Activated CD8-positive, alpha-beta T cell treated with anti-CD3 and anti-CD28 coated beads, Interleukin-2, amount 10 ng/mL, durations not matched to agents 7 days and 5 days (primary cell): ENCODE measurements at regions of chr19 and their contacts with region 1.

Region 1: DNA sequence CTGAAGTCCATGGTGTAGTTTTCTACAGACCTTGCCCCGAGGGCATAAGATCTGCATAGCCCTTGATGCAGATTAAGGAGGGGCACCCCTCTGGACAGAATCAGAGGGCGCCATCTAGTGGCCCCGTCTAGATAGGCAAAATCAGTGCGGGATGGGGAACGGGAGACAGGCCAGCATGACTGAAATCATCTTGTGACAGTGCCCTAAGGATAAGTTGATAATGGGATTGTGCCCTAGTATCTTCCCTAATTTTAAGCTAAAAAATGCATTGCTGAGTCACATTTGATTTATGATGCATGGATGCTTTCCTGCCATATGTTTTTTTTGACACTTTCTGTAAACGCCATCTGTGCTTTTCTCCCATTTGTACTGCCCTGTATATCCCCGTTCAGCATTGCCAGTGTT is 19.0 kb upstream of the GPI start:
- DNase-seq: peak; percentile 77
- ATAC-seq: peak; percentile 31
- H3K4me3 Mint-ChIP-seq: no peak overlapping the region
- H3K27ac Mint-ChIP-seq: peak overlapping the region; percentile 9
- H3K4me1 Mint-ChIP-seq: peaks cover 27% of the 10 kb centered on the region
- H3K27me3 Mint-ChIP-seq: no peaks in the 10 kb centered on the region

Region 2: DNA sequence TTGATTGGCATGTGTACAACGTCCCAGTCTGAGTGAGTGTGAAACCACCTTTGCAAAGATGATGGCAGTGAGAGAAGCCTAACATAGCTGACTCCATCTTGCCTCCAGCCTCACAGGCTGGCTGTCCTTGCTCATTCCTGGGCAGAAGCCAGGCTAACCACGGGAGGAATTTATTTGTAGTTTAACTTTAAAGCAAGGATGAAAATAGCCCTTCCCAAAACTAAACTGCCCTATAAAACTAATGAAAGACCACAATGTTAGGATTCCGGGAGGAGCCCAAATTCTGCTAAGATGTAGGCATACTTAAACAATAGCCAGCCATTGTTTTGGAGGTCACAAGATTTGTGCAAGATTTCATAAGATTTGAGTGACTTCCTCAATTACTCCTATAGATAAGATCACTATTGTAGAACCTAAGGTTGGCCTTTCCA is 270.3 kb before region 1 on chr19:
- CTCF ChIA-PET with region 1: no interaction called
- POLR2A ChIA-PET with region 1: no interaction called
- DNase-seq: no peak
- ATAC-seq: no peak
- H3K4me3 Mint-ChIP-seq: no peak overlapping the region
- H3K27ac Mint-ChIP-seq: no peak overlapping the region
- H3K4me1 Mint-ChIP-seq: no peaks in the 10 kb centered on the region
- H3K27me3 Mint-ChIP-seq: peaks cover 4% of the 10 kb centered on the region

Region 3: DNA sequence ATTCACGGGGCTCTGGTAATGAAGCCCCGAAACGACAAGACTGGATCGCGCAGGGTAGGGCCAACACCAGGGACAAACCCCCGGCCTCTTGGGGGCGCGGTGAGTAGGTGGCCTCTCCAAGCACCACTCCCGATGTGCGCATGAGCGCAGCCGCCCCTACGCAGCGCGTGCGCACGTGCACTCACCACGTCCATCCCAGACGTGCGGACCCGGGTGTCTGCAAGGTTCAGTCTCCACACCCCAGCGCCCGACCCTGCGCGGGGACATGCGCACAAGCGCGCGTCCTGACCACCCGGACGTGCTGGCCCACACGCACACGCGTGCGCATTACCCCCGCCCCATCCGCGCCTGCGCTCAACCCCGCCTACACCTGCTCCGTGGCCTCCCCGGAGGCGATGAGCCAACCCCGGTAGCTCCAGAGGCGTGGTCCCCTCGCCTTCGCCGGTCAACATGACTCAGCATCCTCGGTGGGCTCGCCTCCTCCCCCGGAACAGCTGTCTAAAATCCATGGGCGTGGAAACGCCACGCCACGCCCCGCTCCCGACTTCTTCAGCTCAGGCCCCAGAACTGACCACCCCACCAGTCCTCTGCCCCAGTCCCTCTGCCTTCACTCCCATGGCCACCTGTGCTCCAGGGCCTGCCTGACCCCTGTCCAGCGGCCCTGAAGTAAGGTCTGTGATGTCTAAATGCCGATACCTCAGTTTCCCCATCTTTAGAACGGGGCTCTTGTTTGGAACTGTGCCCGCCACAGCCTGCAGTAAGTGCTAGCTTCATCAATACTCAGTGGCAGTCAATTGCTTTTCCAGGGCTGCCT is 13.4 kb after region 1 on chr19:
- CTCF ChIA-PET with region 1: interaction called, 20 read pairs
- POLR2A ChIA-PET with region 1: interaction called, 14 read pairs
- DNase-seq: peak; percentile 97
- ATAC-seq: peak; percentile 96
- H3K4me3 Mint-ChIP-seq: peak overlapping the region; percentile 83
- H3K27ac Mint-ChIP-seq: peak overlapping the region; percentile 88
- H3K4me1 Mint-ChIP-seq: peaks cover 49% of the 10 kb centered on the region
- H3K27me3 Mint-ChIP-seq: no peaks in the 10 kb centered on the region

Region 4: GRCh38 chr19:34364830-34365462 is 19.0 kb after region 1 on chr19 and contains the start of gene GPI:
- CTCF ChIA-PET with region 1: interaction called, 20 read pairs
- POLR2A ChIA-PET with region 1: interaction called, 14 read pairs
- DNase-seq: peak; percentile 71
- ATAC-seq: peak; percentile 92
- H3K4me3 Mint-ChIP-seq: peak within 1 kb of the TSS; percentile 91
- H3K27ac Mint-ChIP-seq: peak within 1 kb of the TSS; percentile 91
- H3K4me1 Mint-ChIP-seq: peaks cover 62% of the 10 kb centered on the region
- H3K27me3 Mint-ChIP-seq: no peaks in the 10 kb centered on the region
- total RNA-seq, gene GPI: 661 to 697 TPM

Region 5: GRCh38 chr19:34386645-34387445 is 40.9 kb after region 1 on chr19:
- CTCF ChIA-PET with region 1: no interaction called
- POLR2A ChIA-PET with region 1: no interaction called
- DNase-seq: no peak
- ATAC-seq: no peak
- H3K4me3 Mint-ChIP-seq: no peak overlapping the region
- H3K27ac Mint-ChIP-seq: no peak overlapping the region
- H3K4me1 Mint-ChIP-seq: no peaks in the 10 kb centered on the region
- H3K27me3 Mint-ChIP-seq: no peaks in the 10 kb centered on the region